ENCODE measurements at regions of chr19 and their contacts with region 1.

Region 1: DNA sequence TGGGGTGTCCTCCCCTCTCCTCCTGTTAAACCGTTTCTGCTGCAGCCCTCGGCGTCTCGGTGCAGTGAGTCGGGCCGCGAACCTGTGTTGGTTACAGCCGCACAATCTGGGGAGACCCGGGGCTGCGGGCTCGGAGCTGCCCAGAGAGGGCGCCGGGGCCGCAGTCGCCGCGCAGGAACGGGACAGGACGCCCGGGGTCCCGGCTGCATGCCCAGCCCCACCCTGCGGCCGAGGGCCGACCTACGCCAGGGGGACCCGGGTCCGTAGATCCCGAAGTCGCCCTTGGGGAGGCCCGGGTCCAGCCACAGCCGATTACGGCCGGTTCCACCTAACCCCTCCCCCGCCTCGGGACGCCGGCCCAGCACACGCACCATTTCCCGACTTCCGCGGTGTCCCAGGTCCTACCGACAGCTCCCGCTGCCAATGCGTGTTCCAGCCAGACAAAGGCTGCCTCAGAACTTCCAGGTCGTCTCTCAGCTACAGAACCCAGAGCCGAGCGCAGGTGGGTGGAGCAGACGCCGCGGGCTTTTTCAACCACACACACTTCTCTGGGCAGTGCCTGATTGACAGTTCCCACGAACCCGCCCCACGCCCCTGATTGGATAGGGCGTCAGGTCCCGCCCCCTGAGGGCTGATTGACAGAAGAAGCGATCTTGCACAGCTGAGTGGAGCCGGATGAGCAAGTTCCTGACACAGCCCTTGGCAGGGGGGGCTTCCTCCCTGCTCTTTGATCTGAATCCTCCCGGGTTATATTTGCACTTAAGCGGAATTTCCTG is at the start of gene ZNF443:
- DNase-seq: peak; percentile 97 to 99 (median 98)
- H3K4me3 ChIP-seq: peak within 1 kb of the TSS; percentile 52 to 76
- H3K4me3 Mint-ChIP-seq: peak within 1 kb of the TSS; percentile 99 to 100 (median 100)
- H3K27ac ChIP-seq: peak within 1 kb of the TSS; percentile 57
- H3K27ac Mint-ChIP-seq: peak within 1 kb of the TSS; percentile 94 to 99 (median 96)
- H3K4me1 ChIP-seq: peaks cover 4% of the 10 kb centered on the region
- H3K4me1 Mint-ChIP-seq: peaks cover 7 to 26% (median 17%) of the 10 kb centered on the region in 4 donors
- H3K27me3 ChIP-seq: no peaks in the 10 kb centered on the region
- H3K27me3 Mint-ChIP-seq: no peaks in the 10 kb centered on the region
- total RNA-seq, gene ZNF443: 9.9 to 10.3 TPM

Region 2: GRCh38 chr19:12202250-12202649 is 238.5 kb before region 1 on chr19:
- CTCF ChIA-PET with region 1: no interaction called
- POLR2A ChIA-PET with region 1: no interaction called
- intact Hi-C with region 1: loop called (anchors 2 kb)
- DNase-seq: peak; percentile 41 to 57 (median 50)
- H3K4me3 ChIP-seq: no peak overlapping the region
- H3K4me3 Mint-ChIP-seq: no peak overlapping the region
- H3K27ac ChIP-seq: no peak overlapping the region
- H3K27ac Mint-ChIP-seq: no peak overlapping the region
- H3K4me1 ChIP-seq: peaks cover 8% of the 10 kb centered on the region
- H3K4me1 Mint-ChIP-seq: peaks cover 6 to 24% (median 6%) of the 10 kb centered on the region in 4 donors
- H3K27me3 ChIP-seq: no peaks in the 10 kb centered on the region
- H3K27me3 Mint-ChIP-seq: no peaks in the 10 kb centered on the region

Region 3: DNA sequence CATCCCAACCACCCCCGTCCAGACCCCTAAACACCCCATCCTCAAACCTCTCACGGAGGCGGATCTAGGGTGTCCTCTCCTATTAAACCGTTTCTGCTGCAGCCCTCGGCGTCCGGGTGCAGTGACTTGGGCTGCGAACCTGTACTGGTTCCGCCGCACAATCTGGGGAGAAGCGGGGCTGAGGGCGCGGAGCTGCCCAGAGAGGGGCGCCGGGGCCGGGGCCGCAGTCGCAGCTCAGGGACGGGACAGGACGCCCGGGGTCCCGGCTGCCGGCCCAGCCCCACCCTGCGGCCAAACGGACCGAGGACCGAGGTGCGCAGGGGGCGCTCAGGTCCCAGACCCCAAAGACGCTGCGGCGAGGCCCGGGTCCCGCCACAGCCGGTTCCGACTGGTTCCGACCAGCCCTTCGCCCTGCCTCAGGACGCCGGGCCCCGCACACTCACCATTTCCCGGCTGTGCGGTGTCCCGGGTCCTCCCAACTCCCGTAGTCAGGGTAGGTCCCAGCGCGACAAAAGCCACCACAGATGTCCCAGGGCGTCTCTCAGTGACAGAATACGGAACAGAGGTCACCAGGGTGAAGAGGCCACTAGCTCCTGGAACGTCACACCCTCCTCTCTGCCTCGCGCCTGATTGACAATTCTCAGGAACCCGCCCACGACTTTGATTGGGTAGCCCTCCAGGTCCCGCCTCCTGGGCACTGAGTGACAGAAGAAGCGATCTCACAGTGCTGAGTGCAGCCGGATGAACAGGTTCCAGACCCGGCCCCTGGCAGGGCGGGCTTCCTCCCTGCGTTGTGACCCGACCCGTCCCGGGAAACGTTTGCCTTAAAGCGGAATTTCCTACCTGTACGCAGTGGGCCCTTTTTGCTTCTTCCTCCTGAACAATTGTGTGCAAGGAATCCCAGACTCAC is 146.2 kb before region 1 on chr19 and contains the start of gene ZNF44:
- CTCF ChIA-PET with region 1: no interaction called
- POLR2A ChIA-PET with region 1: interaction called, 4 read pairs
- intact Hi-C with region 1: loop called (anchors 1 kb)
- DNase-seq: peak; percentile 93 to 97 (median 94)
- H3K4me3 ChIP-seq: peak within 1 kb of the TSS; percentile 73 to 79
- H3K4me3 Mint-ChIP-seq: peak within 1 kb of the TSS; percentile 99 to 100 (median 99)
- H3K27ac ChIP-seq: peak within 1 kb of the TSS; percentile 80
- H3K27ac Mint-ChIP-seq: peak within 1 kb of the TSS; percentile 97 to 100 (median 99)
- H3K4me1 ChIP-seq: peaks cover 37% of the 10 kb centered on the region
- H3K4me1 Mint-ChIP-seq: peaks cover 26 to 44% (median 36%) of the 10 kb centered on the region in 4 donors
- H3K27me3 ChIP-seq: no peaks in the 10 kb centered on the region
- H3K27me3 Mint-ChIP-seq: no peaks in the 10 kb centered on the region
- total RNA-seq, gene ZNF44: 62.2 TPM

Region 4: GRCh38 chr19:12365236-12366162 is 75.2 kb before region 1 on chr19 and contains the start of gene ZNF442:
- CTCF ChIA-PET with region 1: no interaction called
- POLR2A ChIA-PET with region 1: interaction called, 7 read pairs
- intact Hi-C with region 1: loop called (anchors 2 kb)
- DNase-seq: peak; percentile 71 to 84 (median 75)
- H3K4me3 ChIP-seq: peak within 1 kb of the TSS; percentile 62 to 69
- H3K4me3 Mint-ChIP-seq: peak within 1 kb of the TSS; percentile 91 to 98 (median 95)
- H3K27ac ChIP-seq: peak within 1 kb of the TSS; percentile 41
- H3K27ac Mint-ChIP-seq: peak within 1 kb of the TSS; percentile 41 to 90 (median 84)
- H3K4me1 ChIP-seq: peaks cover 17% of the 10 kb centered on the region
- H3K4me1 Mint-ChIP-seq: peaks cover 9 to 29% (median 20%) of the 10 kb centered on the region in 4 donors
- H3K27me3 ChIP-seq: no peaks in the 10 kb centered on the region
- H3K27me3 Mint-ChIP-seq: peaks cover 3 to 5% of the 10 kb centered on the region in 2 donors
- total RNA-seq, gene ZNF442: 2.5 to 3.8 TPM

Region 5: DNA sequence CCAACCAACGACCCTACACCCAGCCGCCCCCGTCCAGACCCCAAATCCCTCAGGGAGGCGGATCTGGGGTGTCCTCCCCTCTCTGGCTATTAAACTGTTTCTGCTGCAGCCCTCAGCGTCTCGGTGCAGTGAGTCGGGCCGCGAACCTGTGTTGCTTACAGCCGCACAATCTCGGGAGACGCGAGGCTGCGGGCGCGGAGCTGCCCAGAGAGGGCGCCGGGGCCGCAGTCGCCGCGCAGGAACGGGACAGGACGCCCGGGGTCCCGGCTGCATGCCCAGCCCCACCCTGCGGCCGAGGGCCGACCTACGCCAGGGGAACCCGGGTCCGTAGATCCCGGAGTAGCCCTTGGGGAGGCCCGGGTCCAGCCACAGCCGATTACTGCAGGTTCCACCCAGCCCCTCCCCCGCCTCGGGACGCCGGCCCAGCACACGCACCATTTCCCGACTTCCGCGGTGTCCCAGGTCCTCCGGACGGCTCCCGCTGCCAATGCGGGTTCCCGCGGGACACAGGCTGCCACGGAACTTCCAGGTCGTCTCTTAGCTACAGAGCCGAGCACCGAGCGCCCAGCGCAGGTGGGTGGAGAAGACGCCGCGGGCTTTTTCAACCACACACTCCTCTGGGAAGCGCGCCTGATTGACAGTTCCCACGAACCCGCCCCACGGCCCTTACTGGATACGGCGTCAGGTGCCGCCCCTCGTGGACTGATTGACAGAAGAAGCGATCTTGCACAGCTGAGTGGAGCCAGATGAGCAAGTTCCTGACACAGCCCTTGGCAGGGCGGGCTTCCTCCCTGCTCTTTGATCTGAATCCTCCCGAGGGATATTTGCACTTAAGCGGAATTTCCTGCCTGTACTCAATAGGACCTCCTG is 39.9 kb before region 1 on chr19 and contains the start of gene ZNF799:
- CTCF ChIA-PET with region 1: no interaction called
- POLR2A ChIA-PET with region 1: interaction called, 4 read pairs
- intact Hi-C with region 1: loop called (anchors 1 kb)
- DNase-seq: peak; percentile 76 to 83 (median 77)
- H3K4me3 ChIP-seq: peak within 1 kb of the TSS; percentile 64 to 81
- H3K4me3 Mint-ChIP-seq: peak within 1 kb of the TSS; percentile 95 to 96 (median 96)
- H3K27ac ChIP-seq: peak within 1 kb of the TSS; percentile 53
- H3K27ac Mint-ChIP-seq: peak within 1 kb of the TSS; percentile 83 to 95 (median 90)
- H3K4me1 ChIP-seq: peaks cover 6% of the 10 kb centered on the region
- H3K4me1 Mint-ChIP-seq: peaks cover 12 to 27% (median 21%) of the 10 kb centered on the region in 4 donors
- H3K27me3 ChIP-seq: no peaks in the 10 kb centered on the region
- H3K27me3 Mint-ChIP-seq: no peaks in the 10 kb centered on the region
- total RNA-seq, gene ZNF799: 10.1 to 10.3 TPM

Region 6: DNA sequence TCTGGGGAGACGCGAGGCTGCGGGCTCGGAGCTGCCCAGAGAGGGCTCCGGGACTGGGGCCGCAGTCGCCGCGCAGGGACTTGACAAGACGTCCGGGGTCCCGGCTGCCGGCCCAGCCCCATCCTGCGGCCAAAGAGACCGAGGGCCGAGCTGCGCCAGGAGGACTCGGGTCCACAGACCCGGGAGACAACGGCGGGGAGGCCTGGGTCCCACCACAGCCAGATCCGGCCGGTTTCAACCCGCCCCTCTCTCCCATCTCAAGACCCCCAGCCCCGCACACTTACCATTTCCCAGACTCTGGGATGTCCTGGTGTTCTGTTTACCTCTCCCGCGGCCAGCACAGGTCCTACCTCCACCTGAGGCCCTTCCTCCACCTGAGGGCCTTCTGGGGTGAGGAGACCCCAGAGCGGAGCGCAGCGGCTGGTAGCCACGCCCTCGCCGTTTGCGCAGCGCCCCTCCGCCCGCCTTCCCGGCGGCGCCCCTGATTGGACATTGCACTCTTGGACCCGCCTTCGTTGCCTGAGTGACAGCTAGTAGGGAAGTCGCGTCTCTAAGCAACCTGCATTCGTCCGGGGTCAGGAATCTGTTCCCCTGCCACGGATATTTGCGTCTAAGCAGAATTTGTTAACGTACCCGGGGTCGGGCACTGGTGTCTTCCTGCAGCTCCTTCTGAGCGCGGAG is 43.8 kb after region 1 on chr19 and contains the start of gene ZNF709:
- CTCF ChIA-PET with region 1: no interaction called
- POLR2A ChIA-PET with region 1: interaction called, 7 read pairs
- intact Hi-C with region 1: loop called (anchors 2 kb)
- DNase-seq: peak; percentile 82 to 88 (median 85)
- H3K4me3 ChIP-seq: peak within 1 kb of the TSS; percentile 91 to 99
- H3K4me3 Mint-ChIP-seq: peak within 1 kb of the TSS; percentile 94 to 98 (median 96)
- H3K27ac ChIP-seq: peak within 1 kb of the TSS; percentile 77
- H3K27ac Mint-ChIP-seq: peak within 1 kb of the TSS; percentile 83 to 97 (median 95)
- H3K4me1 ChIP-seq: peaks cover 26% of the 10 kb centered on the region
- H3K4me1 Mint-ChIP-seq: peaks cover 23 to 36% (median 28%) of the 10 kb centered on the region in 4 donors
- H3K27me3 ChIP-seq: no peaks in the 10 kb centered on the region
- H3K27me3 Mint-ChIP-seq: no peaks in the 10 kb centered on the region
- total RNA-seq, gene ZNF709: 7.1 to 9.6 TPM

Region 7: GRCh38 chr19:12521996-12522395 is 81.3 kb after region 1 on chr19:
- CTCF ChIA-PET with region 1: no interaction called
- POLR2A ChIA-PET with region 1: no interaction called
- intact Hi-C with region 1: no loop called
- DNase-seq: no peak
- H3K4me3 ChIP-seq: no peak overlapping the region
- H3K4me3 Mint-ChIP-seq: peak overlapping the region in 1 of 8 donors; percentile 20
- H3K27ac ChIP-seq: no peak overlapping the region
- H3K27ac Mint-ChIP-seq: no peak overlapping the region
- H3K4me1 ChIP-seq: no peaks in the 10 kb centered on the region
- H3K4me1 Mint-ChIP-seq: peaks cover 0 to 2% (median 0%) of the 10 kb centered on the region in 4 donors
- H3K27me3 ChIP-seq: no peaks in the 10 kb centered on the region
- H3K27me3 Mint-ChIP-seq: no peaks in the 10 kb centered on the region

Region 8: GRCh38 chr19:12913011-12913561 is 472.4 kb after region 1 on chr19:
- CTCF ChIA-PET with region 1: no interaction called
- POLR2A ChIA-PET with region 1: no interaction called
- intact Hi-C with region 1: no loop called
- DNase-seq: no peak
- H3K4me3 ChIP-seq: no peak overlapping the region
- H3K4me3 Mint-ChIP-seq: peak overlapping the region in 2 of 8 donors; percentile 5 to 31
- H3K27ac ChIP-seq: no peak overlapping the region
- H3K27ac Mint-ChIP-seq: peak overlapping the region in 5 of 7 donors; percentile 3 to 98 (median 88)
- H3K4me1 ChIP-seq: peaks cover 21% of the 10 kb centered on the region
- H3K4me1 Mint-ChIP-seq: peaks cover 9 to 29% (median 18%) of the 10 kb centered on the region in 4 donors
- H3K27me3 ChIP-seq: no peaks in the 10 kb centered on the region
- H3K27me3 Mint-ChIP-seq: no peaks in the 10 kb centered on the region